Dorsolateral prefrontal cortex (tissue), 120 donors: ENCODE measurements at regions of chrX and their contacts with region 1.

Region 1: GRCh38 chrX:43958529-43958928 is 14.7 kb downstream of the NDP start:
- DNase-seq: peak in 2 of 10 donors; percentile 35 to 56
- H3K4me3 ChIP-seq: peak overlapping the region in 1 of 59 donors; percentile 6
- H3K27ac ChIP-seq: peak overlapping the region in 39 of 59 donors; percentile 0 to 75 (median 48)
- H3K27me3 ChIP-seq: peaks cover 0 to 80% (median 19%) of the 10 kb centered on the region in 45 donors
- CTCF ChIP-seq: peak; percentile 59 to 94 (median 84)

Region 2: GRCh38 chrX:43836435-43837184 is 121.9 kb before region 1 on chrX:
- intact Hi-C with region 1: loop called in 1 of 2 experiments (anchors 10 kb)
- DNase-seq: no peak
- H3K4me3 ChIP-seq: no peak overlapping the region
- H3K27ac ChIP-seq: no peak overlapping the region
- H3K27me3 ChIP-seq: peaks cover 0 to 66% (median 9%) of the 10 kb centered on the region in 45 donors
- CTCF ChIP-seq: peak; percentile 34 to 82 (median 69)

Region 3: GRCh38 chrX:44025555-44025954 is 67.0 kb after region 1 on chrX:
- intact Hi-C with region 1: loop called in 1 of 2 experiments (anchors 5 kb)
- DNase-seq: no peak
- H3K4me3 ChIP-seq: no peak overlapping the region
- H3K27ac ChIP-seq: peak overlapping the region in 5 of 59 donors; percentile 16 to 38 (median 20)
- H3K27me3 ChIP-seq: peaks cover 0 to 62% (median 12%) of the 10 kb centered on the region in 45 donors
- CTCF ChIP-seq: no peak

Region 4: GRCh38 chrX:44183329-44183728 is 224.8 kb after region 1 on chrX:
- intact Hi-C with region 1: loop called in 1 of 2 experiments (anchors 5 kb)
- DNase-seq: no peak
- H3K4me3 ChIP-seq: peak overlapping the region in 4 of 59 donors; percentile 18 to 32 (median 22)
- H3K27ac ChIP-seq: peak overlapping the region in 6 of 59 donors; percentile 20 to 64 (median 31)
- H3K27me3 ChIP-seq: peaks cover 0 to 31% (median 3%) of the 10 kb centered on the region in 45 donors
- CTCF ChIP-seq: peak in 44 of 56 donors; percentile 6 to 64 (median 38)

Region 5: DNA sequence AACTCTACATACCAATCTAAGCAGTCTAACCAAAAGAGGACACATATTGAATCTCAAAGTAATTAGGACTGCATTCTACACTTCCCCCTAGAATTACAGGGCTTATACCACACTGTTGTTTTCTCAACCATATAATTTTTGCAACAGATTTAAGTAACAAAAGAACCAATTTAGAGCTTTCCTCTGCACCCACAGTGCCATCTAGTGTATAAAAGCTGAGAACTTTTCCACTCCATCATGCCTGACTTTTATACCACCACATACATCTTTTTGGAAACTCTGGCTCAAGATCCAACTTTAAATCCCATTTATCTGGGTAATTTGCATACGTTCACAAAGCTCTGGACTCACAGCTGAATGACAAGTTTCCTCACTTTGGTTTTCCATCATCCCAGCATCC is 285.5 kb after region 1 on chrX:
- intact Hi-C with region 1: loop called (anchors 5 kb)
- DNase-seq: no peak
- H3K4me3 ChIP-seq: no peak overlapping the region
- H3K27ac ChIP-seq: peak overlapping the region in 18 of 59 donors; percentile 12 to 56 (median 36)
- H3K27me3 ChIP-seq: peaks cover 0 to 83% (median 36%) of the 10 kb centered on the region in 45 donors
- CTCF ChIP-seq: peak; percentile 15 to 85 (median 65)